Right cardiac atrium (tissue), 5 donors: ENCODE measurements at regions of chr2 and their contacts with region 1.

Region 1: GRCh38 chr2:46286715-46287114 is 10.5 kb upstream of the EPAS1 start:
- DNase-seq: peak in 1 of 3 donors; percentile 25
- ATAC-seq: no peak
- H3K4me3 ChIP-seq: no peak overlapping the region
- H3K27ac ChIP-seq: no peak overlapping the region
- H3K4me1 ChIP-seq: no peaks in the 10 kb centered on the region
- H3K27me3 ChIP-seq: no peaks in the 10 kb centered on the region

Region 2: GRCh38 chr2:45391866-45392265 is 894.8 kb before region 1 on chr2:
- intact Hi-C with region 1: no loop called
- DNase-seq: no peak
- ATAC-seq: no peak
- H3K4me3 ChIP-seq: no peak overlapping the region
- H3K27ac ChIP-seq: no peak overlapping the region
- H3K4me1 ChIP-seq: no peaks in the 10 kb centered on the region
- H3K27me3 ChIP-seq: no peaks in the 10 kb centered on the region

Region 3: DNA sequence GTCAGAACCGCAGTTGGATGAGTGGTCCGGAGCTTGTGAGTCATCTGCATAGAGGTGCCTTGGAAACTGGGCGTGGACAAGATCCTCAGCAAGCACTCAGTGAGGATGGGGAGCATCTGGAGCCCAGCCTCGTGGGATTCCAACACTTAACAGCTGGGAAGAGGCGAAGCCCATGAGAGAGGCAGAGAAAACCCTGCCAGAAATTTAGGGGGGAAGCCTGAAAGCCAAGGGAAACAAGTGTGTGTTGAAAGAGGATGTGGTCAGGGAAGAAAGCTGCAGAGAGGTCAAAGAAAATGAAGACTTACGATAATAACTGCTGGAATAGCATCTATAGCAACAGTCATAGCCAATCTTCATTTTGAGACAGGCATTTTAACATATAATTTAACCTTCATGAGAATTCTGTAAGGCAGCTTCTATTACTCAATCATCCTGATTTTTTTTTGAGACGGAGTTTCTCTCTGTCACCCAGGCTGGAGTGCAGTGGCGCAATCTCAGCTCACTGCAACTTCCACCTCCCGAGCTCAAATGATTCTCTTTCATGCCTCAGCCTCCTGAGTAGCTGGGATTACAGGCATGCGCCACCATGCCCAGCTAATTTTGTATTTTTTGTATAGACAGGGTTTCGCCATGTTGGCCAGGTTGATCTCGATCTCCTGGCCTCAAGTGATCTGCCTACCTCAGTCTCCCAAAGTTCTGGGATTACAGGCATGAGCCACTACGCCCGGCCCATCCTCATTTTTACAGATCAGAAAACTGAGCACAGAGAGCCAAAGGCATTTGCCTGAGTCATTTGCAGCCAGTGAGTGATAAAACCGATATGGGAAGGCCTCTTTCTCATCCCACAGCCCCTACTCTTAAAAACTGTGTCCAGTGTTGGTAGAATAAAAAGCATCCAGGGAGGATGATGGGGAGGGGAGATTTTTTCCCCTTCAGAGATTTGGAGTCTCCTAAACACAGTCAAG is 203.9 kb before region 1 on chr2:
- intact Hi-C with region 1: no loop called
- DNase-seq: peak; percentile 66 to 77 (median 74)
- ATAC-seq: peak; percentile 55 to 89
- H3K4me3 ChIP-seq: no peak overlapping the region
- H3K27ac ChIP-seq: no peak overlapping the region
- H3K4me1 ChIP-seq: peaks cover 2% of the 10 kb centered on the region
- H3K27me3 ChIP-seq: no peaks in the 10 kb centered on the region

Region 4: DNA sequence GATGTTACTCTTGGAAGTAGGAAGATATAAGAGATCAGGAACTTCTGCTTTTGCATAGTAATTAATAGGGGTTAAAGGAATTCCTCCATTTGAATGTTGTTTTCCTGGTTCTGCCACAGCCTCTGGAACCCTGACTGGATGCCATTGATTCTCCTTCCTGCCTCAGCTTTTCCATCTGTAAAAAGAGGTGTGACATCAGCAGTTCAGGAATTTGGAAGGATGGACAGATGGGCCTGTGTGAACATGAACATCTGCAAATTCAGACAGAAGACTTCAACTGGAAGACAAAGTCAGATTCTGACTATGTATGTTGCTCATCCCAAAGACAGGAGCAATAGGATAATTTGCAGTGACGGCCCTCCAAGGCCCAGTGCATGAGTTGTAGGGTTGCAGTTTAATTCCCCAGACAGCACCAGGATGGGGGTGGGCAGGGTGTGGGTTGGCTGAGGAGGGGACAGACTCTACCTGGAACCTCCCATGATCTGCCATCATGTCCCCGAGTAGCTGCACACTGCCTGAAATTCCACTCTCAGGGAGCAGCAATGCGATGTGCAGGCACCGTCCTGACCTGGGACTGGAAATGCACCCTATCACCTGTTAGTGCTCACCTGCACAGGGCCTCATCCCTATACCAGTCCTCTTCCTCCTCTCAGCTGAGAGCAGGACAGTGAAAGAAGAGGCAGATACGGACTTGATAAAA is 88.4 kb before region 1 on chr2:
- intact Hi-C with region 1: loop called in 1 of 4 experiments (anchors 10 kb)
- DNase-seq: no peak
- ATAC-seq: no peak
- H3K4me3 ChIP-seq: no peak overlapping the region
- H3K27ac ChIP-seq: no peak overlapping the region
- H3K4me1 ChIP-seq: peaks cover 16% of the 10 kb centered on the region
- H3K27me3 ChIP-seq: no peaks in the 10 kb centered on the region